ENCODE measurements at regions of chr14 and their contacts with region 1.

Region 1: DNA sequence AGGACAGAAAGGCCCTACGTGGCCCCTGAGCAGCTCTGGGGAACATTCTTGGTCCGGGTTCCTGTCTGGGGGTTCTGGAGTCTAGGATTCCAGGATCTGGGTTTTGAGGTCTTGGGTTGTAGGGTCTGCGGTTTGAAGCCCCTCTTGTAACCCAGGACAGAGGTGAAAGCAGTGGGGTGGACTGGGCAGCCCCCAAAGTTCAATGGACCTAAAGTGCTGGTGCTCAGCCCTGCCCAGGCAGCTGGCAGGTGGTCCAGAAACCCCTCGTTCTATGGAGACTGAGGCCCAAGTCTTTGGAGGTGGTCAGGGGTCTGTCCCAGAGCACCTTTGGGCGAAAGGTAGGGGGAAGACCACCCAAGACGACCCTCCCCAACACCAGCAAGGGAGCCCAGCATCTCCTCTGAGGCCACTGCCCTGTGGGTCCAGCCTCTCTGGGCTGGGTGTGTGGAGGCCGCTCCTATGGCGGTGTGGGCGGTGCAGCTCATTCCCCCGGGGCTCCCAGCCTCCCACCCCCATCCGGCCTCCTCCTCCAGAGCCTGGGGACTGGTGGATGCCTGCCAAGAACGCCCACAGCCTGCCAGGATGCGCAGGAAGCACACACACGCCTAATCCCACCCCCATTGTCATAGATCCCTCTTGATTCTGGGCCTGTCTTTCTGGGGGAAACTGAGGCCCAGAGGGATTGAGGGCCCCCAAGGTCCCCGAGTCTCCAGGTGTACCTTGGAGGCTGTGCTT is 30.2 kb upstream of the ANKRD9 start:
- DNase-seq: peak; percentile 54 to 68 (median 64)
- ATAC-seq: peak; percentile 52
- H3K4me3 ChIP-seq: no peak overlapping the region
- H3K27ac ChIP-seq: peak overlapping the region; percentile 75
- H3K4me1 ChIP-seq: peaks cover 22 to 59% of the 10 kb centered on the region in 2 experiments
- H3K27me3 ChIP-seq: no peaks in the 10 kb centered on the region
- CTCF ChIP-seq: no peak
- EP300 ChIP-seq: no peak
- POLR2A ChIP-seq: no peak
- RAD21 ChIP-seq: no peak

Region 2: GRCh38 chr14:102584871-102585869 is 45.4 kb after region 1 on chr14:
- CTCF ChIA-PET with region 1: no interaction called
- POLR2A ChIA-PET with region 1: no interaction called
- in situ Hi-C with region 1: loop called (anchors 5 kb)
- intact Hi-C with region 1: no loop called
- DNase-seq: peak; percentile 45 to 70 (median 62)
- ATAC-seq: peak; percentile 71
- H3K4me3 ChIP-seq: no peak overlapping the region
- H3K27ac ChIP-seq: peak overlapping the region; percentile 72; the same call in 2 of the 3 replicates
- H3K4me1 ChIP-seq: peaks cover 20% of the 10 kb centered on the region in 2 experiments; a peak in 4 of 5 replicates
- H3K27me3 ChIP-seq: no peaks in the 10 kb centered on the region
- CTCF ChIP-seq: no peak
- EP300 ChIP-seq: no peak
- POLR2A ChIP-seq: no peak
- RAD21 ChIP-seq: no peak